Calu3 (cell line): ENCODE measurements at regions of chr14 and their contacts with region 1.

Region 1: DNA sequence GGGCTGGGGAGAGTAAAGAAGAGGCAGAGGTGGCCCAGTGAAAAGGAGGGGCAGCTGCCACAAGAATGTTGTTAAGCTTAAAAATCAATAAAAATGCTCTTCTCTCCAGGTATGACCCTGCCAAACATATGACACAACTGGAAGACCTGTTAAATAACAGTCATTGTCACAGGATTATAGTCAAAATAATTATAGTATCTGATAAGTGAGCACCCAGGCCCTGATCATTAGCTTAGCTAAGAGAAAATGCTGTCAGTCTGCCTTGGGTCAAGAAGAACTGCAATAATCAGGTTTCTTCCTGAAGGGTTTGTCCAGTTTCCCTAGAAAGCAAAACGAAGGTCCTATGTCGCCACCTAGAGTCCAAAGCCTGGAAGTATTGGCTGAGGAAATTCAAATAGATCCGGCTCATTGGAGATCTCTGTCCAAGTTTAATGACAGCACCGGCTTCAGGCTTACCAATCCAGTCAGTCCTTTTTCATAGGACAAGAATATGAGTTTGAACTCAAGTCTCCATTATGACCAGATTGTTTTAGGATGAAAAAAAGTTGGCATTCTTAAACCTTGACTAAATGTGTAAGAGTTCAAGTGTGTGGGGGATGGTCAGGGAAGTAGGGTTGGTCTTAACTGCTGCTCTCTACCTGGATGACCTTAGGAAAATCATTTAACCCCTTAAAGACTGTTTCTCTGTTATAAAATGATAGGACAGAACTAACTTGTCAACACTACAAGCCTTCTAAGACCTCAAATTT is 22.5 kb upstream of the NKX2-8 start:
- DNase-seq: peak; percentile 68
- H3K4me3 Mint-ChIP-seq: no peak overlapping the region
- H3K27ac Mint-ChIP-seq: no peak overlapping the region
- H3K4me1 Mint-ChIP-seq: peaks cover 12% of the 10 kb centered on the region
- H3K27me3 Mint-ChIP-seq: peaks cover 20% of the 10 kb centered on the region
- CTCF ChIP-seq: peak; percentile 52

Region 2: GRCh38 chr14:36207500-36207899 is 397.4 kb before region 1 on chr14:
- CTCF ChIA-PET with region 1: no interaction called
- intact Hi-C with region 1: loop called (anchors 2 kb)
- DNase-seq: no peak
- H3K4me3 Mint-ChIP-seq: no peak overlapping the region
- H3K27ac Mint-ChIP-seq: no peak overlapping the region
- H3K4me1 Mint-ChIP-seq: no peaks in the 10 kb centered on the region
- H3K27me3 Mint-ChIP-seq: no peaks in the 10 kb centered on the region
- CTCF ChIP-seq: peak; percentile 12

Region 3: GRCh38 chr14:36619853-36620252 is 14.9 kb after region 1 on chr14:
- CTCF ChIA-PET with region 1: no interaction called
- intact Hi-C with region 1: no loop called
- DNase-seq: no peak
- H3K4me3 Mint-ChIP-seq: no peak overlapping the region
- H3K27ac Mint-ChIP-seq: no peak overlapping the region
- H3K4me1 Mint-ChIP-seq: peaks cover 10% of the 10 kb centered on the region
- H3K27me3 Mint-ChIP-seq: peaks cover 21% of the 10 kb centered on the region
- CTCF ChIP-seq: no peak

Region 4: DNA sequence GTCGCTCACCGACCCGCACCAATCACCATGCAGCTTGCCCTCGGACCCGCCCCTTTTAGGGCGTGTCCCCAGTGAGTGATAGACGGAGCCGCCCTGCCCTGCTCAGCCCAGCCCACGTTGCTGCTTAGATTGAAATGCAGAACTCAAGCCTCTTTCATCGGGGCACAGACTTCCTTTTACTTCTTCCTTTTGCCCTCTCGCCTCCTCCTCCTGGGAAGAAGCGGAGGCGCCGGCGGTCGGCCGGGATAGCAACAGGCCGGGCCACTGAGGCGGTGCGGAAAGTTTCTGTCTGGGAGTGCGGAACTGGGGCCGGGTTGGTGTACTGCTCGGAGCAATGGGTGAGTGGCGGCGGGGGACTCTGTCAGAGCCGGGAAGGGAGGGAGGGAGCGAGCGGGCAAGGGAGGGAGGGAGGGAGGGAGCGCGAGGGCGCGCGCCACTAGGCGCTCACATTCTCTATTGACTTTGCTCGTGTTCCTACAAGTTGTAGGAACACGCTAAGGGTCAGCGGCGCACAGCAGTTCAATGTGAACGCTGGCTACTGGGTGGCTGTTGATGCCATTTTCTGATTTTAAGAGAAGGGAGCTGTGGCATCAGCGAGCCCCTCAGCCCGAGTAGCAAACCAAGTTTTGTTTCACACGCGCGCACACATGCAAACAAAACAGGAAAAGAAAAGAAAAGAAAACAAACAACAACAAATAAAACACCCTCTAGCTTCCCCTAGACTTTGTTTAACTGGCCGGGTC is 57.0 kb after region 1 on chr14 and contains the start of gene PAX9:
- CTCF ChIA-PET with region 1: no interaction called
- intact Hi-C with region 1: no loop called
- DNase-seq: peak; percentile 95
- H3K4me3 Mint-ChIP-seq: peak within 1 kb of the TSS; percentile 87
- H3K27ac Mint-ChIP-seq: peak within 1 kb of the TSS; percentile 69
- H3K4me1 Mint-ChIP-seq: peaks cover 16% of the 10 kb centered on the region
- H3K27me3 Mint-ChIP-seq: peaks cover 29% of the 10 kb centered on the region
- CTCF ChIP-seq: no peak
- total RNA-seq, gene PAX9: 4.5 and 5.3 TPM in 2 replicates

Region 5: GRCh38 chr14:36845356-36846012 is 240.6 kb after region 1 on chr14:
- CTCF ChIA-PET with region 1: no interaction called
- intact Hi-C with region 1: no loop called
- DNase-seq: no peak
- H3K4me3 Mint-ChIP-seq: no peak overlapping the region
- H3K27ac Mint-ChIP-seq: no peak overlapping the region
- H3K4me1 Mint-ChIP-seq: peaks cover 10% of the 10 kb centered on the region
- H3K27me3 Mint-ChIP-seq: peaks cover 7% of the 10 kb centered on the region
- CTCF ChIP-seq: no peak

Region 6: GRCh38 chr14:37036669-37037341 is 431.9 kb after region 1 on chr14:
- CTCF ChIA-PET with region 1: no interaction called
- intact Hi-C with region 1: no loop called
- DNase-seq: no peak
- H3K4me3 Mint-ChIP-seq: no peak overlapping the region
- H3K27ac Mint-ChIP-seq: no peak overlapping the region
- H3K4me1 Mint-ChIP-seq: peaks cover 12% of the 10 kb centered on the region
- H3K27me3 Mint-ChIP-seq: no peaks in the 10 kb centered on the region
- CTCF ChIP-seq: no peak